ENCODE measurements at regions of chr15 and their contacts with region 1.

Region 1: GRCh38 chr15:100349696-100350433 is 8.1 kb upstream of the ADAMTS17 start:
- DNase-seq: peak; percentile 74 to 90 (median 82)
- ATAC-seq: peak; percentile 98
- H3K4me3 ChIP-seq: peak overlapping the region; percentile 98
- H3K4me3 Mint-ChIP-seq: peak overlapping the region; percentile 89 to 97 (median 96)
- H3K27ac ChIP-seq: peak overlapping the region; percentile 79
- H3K27ac Mint-ChIP-seq: peak overlapping the region; percentile 77 to 95 (median 90)
- H3K4me1 ChIP-seq: peaks cover 0 to 12% of the 10 kb centered on the region in 2 donors
- H3K4me1 Mint-ChIP-seq: peaks cover 7 to 22% (median 14%) of the 10 kb centered on the region in 7 donors
- H3K27me3 ChIP-seq: peaks cover 0 to 4% of the 10 kb centered on the region in 2 donors
- H3K27me3 Mint-ChIP-seq: peaks cover 0 to 29% (median 14%) of the 10 kb centered on the region in 5 donors

Region 2: DNA sequence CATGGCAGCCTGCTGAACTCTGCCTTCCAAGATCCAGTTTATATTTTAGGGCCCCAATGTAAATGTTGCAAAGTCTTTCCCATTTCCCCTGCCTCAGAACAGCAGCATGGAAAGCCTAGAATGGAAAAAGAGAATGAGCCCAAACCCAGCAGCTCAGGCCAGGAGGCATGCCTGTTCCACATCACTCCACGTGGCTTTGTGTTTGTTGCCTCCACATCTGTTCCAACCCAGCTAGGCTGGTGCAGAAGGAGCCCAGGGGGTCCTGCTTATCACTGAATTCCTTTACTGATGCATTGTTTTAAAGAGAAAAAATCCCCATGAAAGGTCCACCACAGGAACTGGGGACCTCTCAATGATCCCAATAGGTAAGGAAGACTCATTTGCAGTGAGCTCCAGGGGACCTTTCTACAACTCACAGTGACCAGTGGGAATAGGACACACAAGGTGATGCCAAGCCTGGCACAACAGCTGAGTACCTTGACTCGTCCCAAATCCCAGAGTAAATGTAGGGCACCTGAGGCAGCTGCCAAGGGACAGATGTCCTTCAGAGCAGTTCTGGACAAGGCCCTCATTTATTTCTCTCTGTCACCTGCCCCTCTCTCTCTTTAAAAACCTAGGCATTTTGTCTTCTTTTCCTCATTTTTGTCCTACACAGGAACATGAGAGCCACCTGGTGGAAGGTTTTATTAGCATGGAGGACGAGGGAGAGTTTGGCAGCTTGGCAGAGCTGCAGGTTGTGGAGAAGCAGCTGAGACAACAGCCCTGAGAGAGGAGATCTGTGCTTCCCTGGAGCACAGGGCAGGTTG is 33.6 kb after region 1 on chr15:
- CTCF ChIA-PET with region 1: interaction called, 6 read pairs
- POLR2A ChIA-PET with region 1: no interaction called
- intact Hi-C with region 1: loop called (anchors 1 kb)
- DNase-seq: peak in 6 of 9 donors; percentile 12 to 35 (median 27)
- ATAC-seq: no peak
- H3K4me3 ChIP-seq: no peak overlapping the region
- H3K4me3 Mint-ChIP-seq: no peak overlapping the region
- H3K27ac ChIP-seq: no peak overlapping the region
- H3K27ac Mint-ChIP-seq: no peak overlapping the region
- H3K4me1 ChIP-seq: no peaks in the 10 kb centered on the region
- H3K4me1 Mint-ChIP-seq: peaks cover 0 to 7% (median 0%) of the 10 kb centered on the region in 7 donors
- H3K27me3 ChIP-seq: no peaks in the 10 kb centered on the region
- H3K27me3 Mint-ChIP-seq: peaks cover 0 to 14% (median 0%) of the 10 kb centered on the region in 5 donors

Region 3: DNA sequence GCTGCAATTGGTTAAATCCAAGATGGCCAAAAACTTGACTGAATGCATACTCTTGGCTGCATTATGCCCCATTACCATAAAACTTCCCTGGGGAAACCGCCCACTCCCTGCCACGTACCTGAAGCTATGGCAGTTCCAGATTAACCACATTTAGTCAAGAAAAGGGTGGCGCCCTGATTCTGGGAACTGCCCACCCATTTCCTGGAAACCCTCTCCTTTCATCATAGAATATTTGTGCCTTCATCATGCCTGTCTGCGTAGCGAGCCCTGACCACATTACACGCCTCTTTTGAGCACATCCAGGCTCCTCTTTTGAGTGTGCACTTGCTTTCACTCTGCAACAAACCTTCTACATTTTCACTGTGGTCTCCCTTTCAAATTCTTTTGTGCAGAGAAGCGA is 246.9 kb after region 1 on chr15:
- CTCF ChIA-PET with region 1: interaction called, 13 read pairs
- POLR2A ChIA-PET with region 1: interaction called, 11 read pairs
- intact Hi-C with region 1: no loop called
- DNase-seq: peak; percentile 52 to 97 (median 94)
- ATAC-seq: peak; percentile 93
- H3K4me3 ChIP-seq: peak overlapping the region; percentile 49
- H3K4me3 Mint-ChIP-seq: peak overlapping the region in 7 of 10 donors; percentile 69 to 87 (median 86)
- H3K27ac ChIP-seq: peak overlapping the region; percentile 91
- H3K27ac Mint-ChIP-seq: peak overlapping the region in 4 of 9 donors; percentile 96 to 98 (median 96)
- H3K4me1 ChIP-seq: peaks cover 52 to 82% of the 10 kb centered on the region in 2 donors
- H3K4me1 Mint-ChIP-seq: peaks cover 0 to 78% (median 51%) of the 10 kb centered on the region in 7 donors
- H3K27me3 ChIP-seq: no peaks in the 10 kb centered on the region
- H3K27me3 Mint-ChIP-seq: peaks cover 0 to 2% (median 0%) of the 10 kb centered on the region in 5 donors

Region 4: GRCh38 chr15:100650685-100651084 is 300.8 kb after region 1 on chr15:
- CTCF ChIA-PET with region 1: interaction called, 6 read pairs
- POLR2A ChIA-PET with region 1: no interaction called
- intact Hi-C with region 1: loop called in 1 of 2 experiments (anchors 1 kb)
- DNase-seq: no peak
- ATAC-seq: no peak
- H3K4me3 ChIP-seq: no peak overlapping the region
- H3K4me3 Mint-ChIP-seq: no peak overlapping the region
- H3K27ac ChIP-seq: no peak overlapping the region
- H3K27ac Mint-ChIP-seq: peak overlapping the region in 2 of 9 donors; percentile 1 to 40
- H3K4me1 ChIP-seq: no peaks in the 10 kb centered on the region
- H3K4me1 Mint-ChIP-seq: peaks cover 0 to 15% (median 4%) of the 10 kb centered on the region in 7 donors
- H3K27me3 ChIP-seq: no peaks in the 10 kb centered on the region
- H3K27me3 Mint-ChIP-seq: no peaks in the 10 kb centered on the region

Region 5: DNA sequence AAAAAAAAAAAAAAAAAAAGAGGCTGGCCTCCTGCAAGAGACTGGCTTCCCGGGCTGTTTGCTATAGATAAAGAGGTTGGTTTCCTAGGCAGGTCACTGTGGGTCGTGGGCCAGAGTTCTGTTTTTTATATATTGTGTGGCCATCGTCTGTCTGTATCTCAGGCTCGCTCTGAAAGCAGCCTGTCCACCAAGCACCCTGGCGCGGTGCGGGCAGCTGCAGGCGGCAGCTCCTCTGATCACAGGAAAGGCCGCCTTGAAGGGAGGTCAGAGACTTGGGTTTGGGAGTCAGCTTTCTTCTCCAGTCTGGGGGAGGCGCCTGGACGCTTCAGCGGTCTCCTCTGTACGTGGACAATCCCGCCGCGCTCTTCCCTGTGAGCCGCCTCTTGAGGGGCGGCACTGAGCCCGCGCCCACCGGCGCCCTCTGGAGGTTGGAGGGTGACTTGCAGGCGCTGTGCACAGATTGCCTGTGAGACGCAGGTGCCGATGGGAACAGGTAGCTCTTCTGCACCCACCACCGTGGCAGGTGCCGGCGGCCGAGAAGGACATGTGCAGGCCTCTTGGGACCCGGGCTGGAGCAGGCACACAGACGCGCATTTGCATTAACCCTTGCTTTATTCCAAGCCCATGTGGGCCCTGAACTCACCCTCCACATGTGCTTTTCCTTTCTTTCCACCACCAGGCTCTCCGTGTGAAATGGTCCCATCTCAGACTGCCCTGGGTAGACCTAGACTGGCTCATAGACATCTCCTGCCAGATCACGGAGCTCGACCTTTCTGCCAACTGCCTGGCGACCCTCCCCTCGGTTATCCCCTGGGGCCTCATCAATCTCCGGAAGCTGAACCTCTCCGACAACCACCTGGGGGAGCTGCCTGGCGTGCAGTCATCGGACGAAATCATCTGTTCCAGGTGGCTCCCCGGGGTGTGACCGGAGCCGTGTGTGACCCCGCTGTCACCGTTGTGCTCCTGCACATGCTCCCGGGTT is 658.6 kb after region 1 on chr15:
- CTCF ChIA-PET with region 1: interaction called, 5 read pairs
- POLR2A ChIA-PET with region 1: no interaction called
- intact Hi-C with region 1: loop called in 1 of 2 experiments (anchors 1 kb)
- DNase-seq: peak; percentile 67 to 92 (median 85)
- ATAC-seq: peak; percentile 97
- H3K4me3 ChIP-seq: peak overlapping the region; percentile 77
- H3K4me3 Mint-ChIP-seq: peak overlapping the region; percentile 84 to 96 (median 90)
- H3K27ac ChIP-seq: no peak overlapping the region
- H3K27ac Mint-ChIP-seq: peak overlapping the region in 3 of 9 donors; percentile 63 to 75 (median 68)
- H3K4me1 ChIP-seq: peaks cover 8 to 9% of the 10 kb centered on the region in 2 donors
- H3K4me1 Mint-ChIP-seq: peaks cover 9 to 25% (median 23%) of the 10 kb centered on the region in 7 donors
- H3K27me3 ChIP-seq: no peaks in the 10 kb centered on the region
- H3K27me3 Mint-ChIP-seq: peaks cover 0 to 29% (median 0%) of the 10 kb centered on the region in 5 donors

Measured in naive thymus-derived CD4-positive, alpha-beta T cell (primary cell).